Gastrocnemius medialis (tissue), 4 donors: ENCODE measurements at regions of chr15 and their contacts with region 1.

Region 1: DNA sequence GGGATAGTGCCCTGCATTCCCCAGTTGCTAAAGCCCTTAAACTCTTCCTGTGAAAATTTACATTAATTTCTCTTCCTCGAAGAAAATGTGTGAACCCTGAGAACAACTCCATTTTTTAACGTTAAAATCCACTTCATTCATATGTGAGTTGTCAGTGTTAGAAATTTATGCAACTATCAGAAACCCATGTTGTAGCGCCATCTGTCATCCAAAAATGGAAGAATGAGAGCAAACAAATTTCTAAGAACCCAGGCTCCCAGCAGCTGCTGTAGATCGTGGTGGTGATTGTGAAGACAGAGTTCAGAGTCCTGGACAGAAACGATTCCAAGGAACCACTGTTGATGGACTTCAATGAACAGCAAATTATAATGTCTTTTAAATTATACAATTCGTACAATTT is 179.7 kb upstream of the NDN start:
- DNase-seq: no peak
- ATAC-seq: no peak
- H3K4me3 ChIP-seq: no peak overlapping the region
- H3K27ac ChIP-seq: no peak overlapping the region
- H3K4me1 ChIP-seq: no peaks in the 10 kb centered on the region
- H3K27me3 ChIP-seq: no peaks in the 10 kb centered on the region
- CTCF ChIP-seq: no peak
- POLR2A ChIP-seq: no peak

Region 2: DNA sequence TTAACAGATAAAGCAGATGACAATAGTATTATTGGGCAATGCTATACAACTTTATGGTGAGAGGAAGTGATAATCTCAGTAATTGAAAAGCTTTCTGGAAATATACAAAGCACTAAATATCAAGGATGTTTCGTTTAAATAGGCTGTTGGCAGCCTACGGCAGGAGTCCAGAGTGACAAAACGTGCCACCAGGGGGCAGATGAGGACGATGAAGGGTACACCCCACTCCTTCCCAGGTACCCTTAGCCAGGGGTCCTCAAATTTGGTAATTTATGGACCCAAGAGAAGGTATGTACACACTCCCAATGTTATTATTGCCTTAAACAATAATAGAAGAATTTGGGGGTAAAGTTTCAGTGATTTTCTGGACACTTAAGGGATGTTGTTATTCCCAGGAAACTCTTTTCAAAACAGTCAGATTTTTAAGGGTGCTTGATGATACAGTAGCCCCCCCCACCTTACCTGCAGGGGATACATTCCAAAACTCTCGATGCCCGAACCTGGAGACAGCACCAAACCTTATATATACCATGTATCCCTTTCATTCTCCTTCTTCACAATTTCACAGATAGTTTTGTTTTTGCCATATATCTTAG is 217.8 kb before region 1 on chr15:
- in situ Hi-C with region 1: loop called (anchors 25 kb)
- intact Hi-C with region 1: loop called (anchors 5 kb)
- DNase-seq: no peak
- ATAC-seq: no peak
- H3K4me3 ChIP-seq: no peak overlapping the region
- H3K27ac ChIP-seq: no peak overlapping the region
- H3K4me1 ChIP-seq: no peaks in the 10 kb centered on the region
- H3K27me3 ChIP-seq: peaks cover 0 to 4% (median 0%) of the 10 kb centered on the region in 3 donors
- CTCF ChIP-seq: peak in 2 of 5 experiments; percentile 13 to 32
- POLR2A ChIP-seq: no peak